ENCODE measurements at regions of chr22 and their contacts with region 1.

Region 1: DNA sequence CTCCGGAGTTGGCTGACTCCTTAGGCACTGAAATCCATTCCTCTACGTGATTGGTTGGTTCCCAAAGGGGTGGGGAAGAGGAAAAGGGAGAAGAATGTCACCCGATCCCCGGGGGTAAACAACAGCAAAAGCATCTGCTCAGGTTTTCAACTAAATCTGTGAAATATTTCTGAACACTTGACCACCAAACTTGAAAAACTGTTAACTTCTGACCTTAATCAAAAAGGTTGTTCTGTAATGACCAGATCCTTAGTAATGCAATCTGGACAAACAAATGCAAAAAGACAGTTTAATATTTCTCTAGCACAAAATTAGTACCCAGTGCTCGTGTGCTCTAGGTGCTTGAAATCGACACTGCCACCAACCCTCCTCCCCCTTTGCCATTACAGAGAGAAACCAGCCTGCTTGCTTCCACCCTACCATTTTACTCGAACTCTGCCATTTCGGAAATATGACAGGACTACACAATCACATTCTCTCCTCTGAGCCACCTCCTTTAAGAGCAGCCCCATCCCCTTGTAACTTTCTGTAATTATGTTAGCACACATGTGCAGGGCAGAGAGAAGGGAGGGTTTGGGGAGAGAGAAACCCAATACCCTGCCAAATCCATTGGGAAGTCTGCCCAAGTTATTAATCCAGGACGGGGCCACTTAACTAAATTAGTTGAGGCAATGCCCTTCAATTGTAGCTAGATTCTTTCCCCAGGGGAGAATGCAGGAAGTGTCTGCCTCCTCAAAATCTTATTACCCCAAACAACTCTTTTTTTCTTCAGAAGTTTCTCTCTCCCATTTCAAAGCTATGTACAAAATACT is 113.8 kb downstream of the RBFOX2 start:
- DNase-seq: peak in 4 of 5 donors; percentile 69 to 85 (median 72)
- ATAC-seq: peak; percentile 87 to 92 (median 90)
- H3K4me3 ChIP-seq: peak overlapping the region; percentile 22 to 58 (median 46)
- H3K27ac ChIP-seq: peak overlapping the region; percentile 57 to 91 (median 84)
- H3K4me1 ChIP-seq: peaks cover 12 to 97% (median 77%) of the 10 kb centered on the region in 12 donors
- H3K27me3 ChIP-seq: no peaks in the 10 kb centered on the region
- CTCF ChIP-seq: no peak
- POLR2A ChIP-seq: no peak

Region 2: DNA sequence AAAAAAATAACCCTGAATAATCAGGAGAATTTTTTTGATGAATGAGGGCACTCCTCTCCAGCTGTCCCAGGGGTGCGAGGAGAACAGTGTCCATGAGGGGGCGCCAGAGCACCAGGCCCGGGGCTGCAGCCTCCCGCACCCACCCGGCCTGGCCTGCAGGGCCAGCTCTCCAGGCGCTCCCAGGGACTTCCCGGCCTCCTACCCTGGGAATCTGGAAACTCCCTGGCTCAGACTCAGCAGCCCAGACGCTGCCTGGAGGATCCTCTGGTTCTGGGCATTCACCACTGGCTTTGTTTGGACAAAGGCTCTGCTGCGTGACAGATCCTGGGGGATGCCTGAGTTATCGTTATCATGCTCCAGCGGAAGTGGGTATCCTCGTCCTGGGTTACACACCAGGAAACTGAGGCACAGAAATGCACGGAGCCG is 484.0 kb before region 1 on chr22:
- intact Hi-C with region 1: loop called in 5 of 10 experiments (anchors 5 to 10 kb)
- DNase-seq: peak; percentile 87 to 93 (median 91)
- ATAC-seq: peak; percentile 95 to 98 (median 98)
- H3K4me3 ChIP-seq: no peak overlapping the region
- H3K27ac ChIP-seq: peak overlapping the region in 6 of 12 donors; percentile 5 to 67 (median 48)
- H3K4me1 ChIP-seq: peaks cover 0 to 13% (median 7%) of the 10 kb centered on the region in 12 donors
- H3K27me3 ChIP-seq: no peaks in the 10 kb centered on the region
- CTCF ChIP-seq: peak; percentile 94 to 98 (median 96)
- POLR2A ChIP-seq: no peak

Region 3: GRCh38 chr22:35467681-35468434 is 447.0 kb before region 1 on chr22:
- intact Hi-C with region 1: no loop called
- DNase-seq: peak; percentile 74 to 93 (median 85)
- ATAC-seq: peak; percentile 94 to 98 (median 98)
- H3K4me3 ChIP-seq: no peak overlapping the region
- H3K27ac ChIP-seq: peak overlapping the region; percentile 64 to 92 (median 78)
- H3K4me1 ChIP-seq: peaks cover 0 to 24% (median 17%) of the 10 kb centered on the region in 12 donors
- H3K27me3 ChIP-seq: no peaks in the 10 kb centered on the region
- CTCF ChIP-seq: no peak
- POLR2A ChIP-seq: peak in 1 of 2 donors; percentile 20

Region 4: GRCh38 chr22:35638410-35638809 is 276.5 kb before region 1 on chr22:
- intact Hi-C with region 1: loop called in 1 of 10 experiments (anchors 2 kb)
- DNase-seq: peak; percentile 89 to 94 (median 92)
- ATAC-seq: peak; percentile 96 to 98 (median 96)
- H3K4me3 ChIP-seq: peak overlapping the region in 3 of 12 donors; percentile 3 to 14 (median 11)
- H3K27ac ChIP-seq: peak overlapping the region; percentile 74 to 93 (median 84)
- H3K4me1 ChIP-seq: peaks cover 9 to 45% (median 30%) of the 10 kb centered on the region in 12 donors
- H3K27me3 ChIP-seq: no peaks in the 10 kb centered on the region
- CTCF ChIP-seq: no peak
- POLR2A ChIP-seq: peak in 1 of 2 donors; percentile 39

Region 5: DNA sequence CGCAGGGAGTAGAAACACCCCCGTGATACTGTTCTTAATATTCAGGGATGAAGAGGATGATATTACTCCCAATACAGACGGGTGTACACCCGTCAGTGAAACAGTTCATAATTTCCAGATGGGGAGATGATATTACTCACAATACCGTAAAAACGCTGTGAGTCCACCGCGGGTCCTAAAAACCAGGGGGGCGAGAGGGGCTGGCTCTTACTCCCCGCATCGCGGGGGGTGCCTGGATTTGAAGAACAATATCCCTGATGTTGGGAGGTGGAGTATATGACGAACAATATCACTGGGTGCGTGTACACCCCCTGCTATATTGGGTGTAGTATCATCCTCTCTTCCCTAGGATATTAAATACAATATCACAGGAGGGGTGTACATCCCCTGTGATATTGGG is 217.7 kb before region 1 on chr22:
- intact Hi-C with region 1: no loop called
- DNase-seq: no peak
- ATAC-seq: no peak
- H3K4me3 ChIP-seq: no peak overlapping the region
- H3K27ac ChIP-seq: no peak overlapping the region
- H3K4me1 ChIP-seq: no peaks in the 10 kb centered on the region
- H3K27me3 ChIP-seq: no peaks in the 10 kb centered on the region
- CTCF ChIP-seq: no peak
- POLR2A ChIP-seq: no peak

Region 6: GRCh38 chr22:35749808-35750207 is 165.1 kb before region 1 on chr22:
- intact Hi-C with region 1: loop called in 4 of 10 experiments (anchors 5 to 10 kb)
- DNase-seq: no peak
- ATAC-seq: peak in 2 of 4 donors; percentile 20 to 30
- H3K4me3 ChIP-seq: no peak overlapping the region
- H3K27ac ChIP-seq: no peak overlapping the region
- H3K4me1 ChIP-seq: peaks cover 0 to 48% (median 28%) of the 10 kb centered on the region in 12 donors
- H3K27me3 ChIP-seq: no peaks in the 10 kb centered on the region
- CTCF ChIP-seq: no peak
- POLR2A ChIP-seq: no peak

Region 7: DNA sequence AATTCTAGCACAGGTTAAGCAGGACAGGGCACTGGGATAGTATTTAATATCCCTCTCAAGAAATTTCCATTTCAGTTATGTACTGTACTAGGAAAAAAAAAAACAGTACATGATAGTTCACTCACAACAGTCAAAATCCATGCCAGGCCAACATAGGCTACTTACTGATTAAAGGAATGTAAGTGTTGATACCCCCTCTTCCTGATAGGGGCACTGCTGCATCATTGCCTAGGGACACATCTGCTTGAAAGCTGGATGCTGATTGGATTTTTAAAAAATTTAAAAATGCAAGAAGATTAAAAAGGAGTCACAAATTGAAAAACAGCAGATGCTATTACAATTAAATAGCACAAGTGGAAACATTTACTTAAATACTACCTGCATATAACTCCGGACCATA is 153.8 kb before region 1 on chr22:
- intact Hi-C with region 1: loop called in 9 of 10 experiments (anchors 5 to 10 kb)
- DNase-seq: no peak
- ATAC-seq: peak in 2 of 4 donors; percentile 57
- H3K4me3 ChIP-seq: no peak overlapping the region
- H3K27ac ChIP-seq: no peak overlapping the region
- H3K4me1 ChIP-seq: peaks cover 0 to 16% (median 1%) of the 10 kb centered on the region in 12 donors
- H3K27me3 ChIP-seq: no peaks in the 10 kb centered on the region
- CTCF ChIP-seq: peak in 11 of 12 donors; percentile 12 to 51 (median 30)
- POLR2A ChIP-seq: no peak

Region 8: DNA sequence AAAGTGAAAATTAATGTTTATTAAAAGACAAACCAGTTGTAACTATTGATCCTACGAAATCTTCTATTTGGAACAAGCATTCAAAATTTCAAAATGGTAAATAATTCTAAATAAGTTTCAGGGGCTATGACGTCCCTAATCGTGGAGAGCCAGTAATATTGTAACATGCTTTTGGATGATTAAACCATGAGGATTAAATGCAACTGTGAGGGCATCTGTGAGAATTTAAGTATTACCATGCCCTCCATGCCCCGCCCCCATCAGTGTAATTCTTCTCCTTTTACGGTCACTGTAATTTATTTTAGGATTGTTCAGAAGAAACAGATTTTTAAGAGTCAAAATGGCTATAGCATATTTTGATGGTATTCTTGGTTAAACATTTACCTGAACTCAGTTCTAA is 64.0 kb before region 1 on chr22:
- intact Hi-C with region 1: no loop called
- DNase-seq: no peak
- ATAC-seq: no peak
- H3K4me3 ChIP-seq: no peak overlapping the region
- H3K27ac ChIP-seq: peak overlapping the region in 7 of 12 donors; percentile 51 to 71 (median 57)
- H3K4me1 ChIP-seq: peaks cover 0 to 42% (median 18%) of the 10 kb centered on the region in 12 donors
- H3K27me3 ChIP-seq: no peaks in the 10 kb centered on the region
- CTCF ChIP-seq: no peak
- POLR2A ChIP-seq: no peak

Region 9: DNA sequence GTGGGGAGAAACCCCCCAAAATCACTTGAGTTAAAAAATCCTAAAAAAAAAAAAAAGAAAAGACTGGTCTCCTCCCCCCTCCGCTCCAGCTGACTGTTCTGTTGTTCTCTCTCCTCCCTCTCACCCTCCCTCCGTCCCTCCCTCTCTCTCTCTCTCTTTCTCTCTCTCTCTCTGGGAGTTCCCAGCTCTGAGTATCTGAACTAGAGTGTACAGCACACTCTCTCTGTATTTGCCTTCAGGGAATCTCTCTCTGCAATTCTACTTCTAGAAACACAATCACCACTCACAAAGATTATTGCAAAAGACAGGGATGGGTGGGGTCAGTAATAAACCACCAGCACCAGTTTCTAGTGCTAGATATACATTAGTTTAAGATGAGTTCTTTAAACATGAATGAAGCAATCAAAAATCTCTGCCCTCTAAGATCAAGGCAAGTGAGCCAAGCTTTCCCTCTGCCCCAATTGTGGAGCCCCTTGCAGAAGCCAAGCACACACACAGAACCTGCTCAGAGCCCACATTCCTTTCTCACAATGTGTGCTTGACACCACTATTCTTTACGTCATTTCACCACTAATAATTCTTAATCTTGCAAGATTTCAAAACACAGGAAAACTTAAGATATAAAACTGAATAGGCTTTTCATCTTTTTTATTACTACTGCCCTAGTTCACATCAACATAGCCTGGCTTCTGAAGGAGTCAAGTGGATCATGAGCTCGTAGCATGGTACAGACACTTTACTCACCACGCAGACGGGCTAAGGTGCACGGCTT is 19.7 kb before region 1 on chr22:
- intact Hi-C with region 1: loop called in 1 of 10 experiments (anchors 2 kb)
- DNase-seq: peak in 4 of 5 donors; percentile 48 to 70 (median 54)
- ATAC-seq: peak; percentile 93 to 95 (median 95)
- H3K4me3 ChIP-seq: peak overlapping the region in 11 of 12 donors; percentile 16 to 57 (median 50)
- H3K27ac ChIP-seq: peak overlapping the region; percentile 76 to 95 (median 86)
- H3K4me1 ChIP-seq: peaks cover 3 to 74% (median 40%) of the 10 kb centered on the region in 12 donors
- H3K27me3 ChIP-seq: no peaks in the 10 kb centered on the region
- CTCF ChIP-seq: no peak
- POLR2A ChIP-seq: no peak

Region 10: DNA sequence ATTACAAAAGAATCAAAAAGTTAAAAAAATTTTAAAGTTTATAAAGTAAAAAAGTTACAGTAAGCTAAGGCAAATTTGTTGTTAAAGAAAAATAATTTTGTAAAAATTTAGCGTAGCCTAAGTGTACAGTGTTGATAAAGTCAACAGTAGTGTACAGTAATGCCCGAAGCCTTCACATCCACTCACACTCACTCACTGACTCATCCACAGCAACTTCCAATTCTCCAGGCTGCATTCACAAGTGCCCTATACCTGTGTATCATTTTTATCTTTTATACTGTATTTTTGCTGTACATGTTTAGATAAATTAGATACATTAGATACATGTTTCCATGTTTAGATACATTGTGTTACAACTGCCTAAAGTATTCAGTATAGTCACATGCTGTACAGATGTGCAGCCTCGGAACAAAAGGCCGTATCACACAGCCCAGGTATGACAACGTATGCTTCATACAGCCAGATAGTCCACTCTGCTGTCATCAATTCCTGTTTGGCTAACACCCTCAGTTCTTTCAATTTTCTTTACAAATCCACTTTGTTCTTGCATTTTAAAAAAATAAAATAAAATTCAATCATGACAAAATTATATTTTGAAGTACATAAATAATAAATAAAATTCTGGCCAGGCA is 33.0 kb after region 1 on chr22:
- intact Hi-C with region 1: no loop called
- DNase-seq: no peak
- ATAC-seq: no peak
- H3K4me3 ChIP-seq: no peak overlapping the region
- H3K27ac ChIP-seq: no peak overlapping the region
- H3K4me1 ChIP-seq: peaks cover 0 to 27% (median 5%) of the 10 kb centered on the region in 12 donors
- H3K27me3 ChIP-seq: no peaks in the 10 kb centered on the region
- CTCF ChIP-seq: no peak
- POLR2A ChIP-seq: no peak